Pancreas (tissue), 10 donors: ENCODE measurements at regions of chr1 and their contacts with region 1.

Region 1: DNA sequence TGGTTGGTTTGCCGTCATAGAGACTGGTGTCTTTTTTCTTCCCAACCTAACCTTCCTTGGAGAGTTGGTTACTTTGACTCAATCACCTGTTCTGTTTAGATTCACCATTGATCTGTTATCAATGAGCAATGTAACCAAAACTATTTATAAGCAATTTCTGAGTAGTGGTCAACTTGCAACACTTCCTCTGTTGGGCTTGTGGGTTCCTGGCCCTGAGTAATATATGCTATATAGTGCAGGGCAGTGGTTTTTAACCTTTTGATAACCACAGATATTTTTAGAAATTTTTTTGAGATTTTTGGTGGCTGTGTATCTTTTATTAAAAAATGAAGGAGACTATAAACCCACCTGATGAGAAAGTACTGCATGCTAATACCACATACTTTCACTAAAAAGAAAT is 9.4 kb upstream of the XCL1 start:
- DNase-seq: no peak
- ATAC-seq: no peak
- H3K4me3 ChIP-seq: no peak overlapping the region
- H3K27ac ChIP-seq: no peak overlapping the region
- H3K4me1 ChIP-seq: no peaks in the 10 kb centered on the region
- H3K27me3 ChIP-seq: no peaks in the 10 kb centered on the region
- CTCF ChIP-seq: no peak

Region 2: GRCh38 chr1:168439456-168440375 is 127.3 kb before region 1 on chr1:
- intact Hi-C with region 1: loop called in 1 of 3 experiments (anchors 10 kb)
- DNase-seq: peak in 5 of 6 donors; percentile 44 to 74 (median 60)
- ATAC-seq: peak; percentile 73 to 97 (median 94)
- H3K4me3 ChIP-seq: no peak overlapping the region
- H3K27ac ChIP-seq: no peak overlapping the region
- H3K4me1 ChIP-seq: no peaks in the 10 kb centered on the region
- H3K27me3 ChIP-seq: no peaks in the 10 kb centered on the region
- CTCF ChIP-seq: peak; percentile 19 to 60 (median 44)

Region 3: GRCh38 chr1:168755800-168756418 is 188.9 kb after region 1 on chr1:
- intact Hi-C with region 1: no loop called
- DNase-seq: no peak
- ATAC-seq: peak in 2 of 4 donors; percentile 24 to 45
- H3K4me3 ChIP-seq: no peak overlapping the region
- H3K27ac ChIP-seq: no peak overlapping the region
- H3K4me1 ChIP-seq: peaks cover 0 to 9% (median 7%) of the 10 kb centered on the region in 3 donors
- H3K27me3 ChIP-seq: no peaks in the 10 kb centered on the region
- CTCF ChIP-seq: no peak